Activated CD8-positive, alpha-beta T cell treated with anti-CD3 and anti-CD28 coated beads, Interleukin-2, amount 10 ng/mL, durations not matched to agents 7 days and 5 days (primary cell): ENCODE measurements at regions of chr4 and their contacts with region 1.

Region 1: GRCh38 chr4:99808260-99808857 is 8.3 kb upstream of the DAPP1 start:
- DNase-seq: peak; percentile 80
- ATAC-seq: peak; percentile 97
- H3K4me3 Mint-ChIP-seq: no peak overlapping the region
- H3K27ac Mint-ChIP-seq: no peak overlapping the region
- H3K4me1 Mint-ChIP-seq: peaks cover 14% of the 10 kb centered on the region
- H3K27me3 Mint-ChIP-seq: peaks cover 10% of the 10 kb centered on the region

Region 2: GRCh38 chr4:99552872-99553271 is 255.5 kb before region 1 on chr4:
- CTCF ChIA-PET with region 1: interaction called, 10 read pairs
- POLR2A ChIA-PET with region 1: no interaction called
- DNase-seq: no peak
- ATAC-seq: no peak
- H3K4me3 Mint-ChIP-seq: no peak overlapping the region
- H3K27ac Mint-ChIP-seq: no peak overlapping the region
- H3K4me1 Mint-ChIP-seq: no peaks in the 10 kb centered on the region
- H3K27me3 Mint-ChIP-seq: no peaks in the 10 kb centered on the region

Region 3: GRCh38 chr4:99847362-99847976 is 39.1 kb after region 1 on chr4:
- CTCF ChIA-PET with region 1: interaction called, 23 read pairs
- POLR2A ChIA-PET with region 1: no interaction called
- DNase-seq: peak; percentile 34
- ATAC-seq: peak; percentile 71
- H3K4me3 Mint-ChIP-seq: peak overlapping the region; percentile 5
- H3K27ac Mint-ChIP-seq: peak overlapping the region; percentile 84
- H3K4me1 Mint-ChIP-seq: peaks cover 62% of the 10 kb centered on the region
- H3K27me3 Mint-ChIP-seq: no peaks in the 10 kb centered on the region

Region 4: DNA sequence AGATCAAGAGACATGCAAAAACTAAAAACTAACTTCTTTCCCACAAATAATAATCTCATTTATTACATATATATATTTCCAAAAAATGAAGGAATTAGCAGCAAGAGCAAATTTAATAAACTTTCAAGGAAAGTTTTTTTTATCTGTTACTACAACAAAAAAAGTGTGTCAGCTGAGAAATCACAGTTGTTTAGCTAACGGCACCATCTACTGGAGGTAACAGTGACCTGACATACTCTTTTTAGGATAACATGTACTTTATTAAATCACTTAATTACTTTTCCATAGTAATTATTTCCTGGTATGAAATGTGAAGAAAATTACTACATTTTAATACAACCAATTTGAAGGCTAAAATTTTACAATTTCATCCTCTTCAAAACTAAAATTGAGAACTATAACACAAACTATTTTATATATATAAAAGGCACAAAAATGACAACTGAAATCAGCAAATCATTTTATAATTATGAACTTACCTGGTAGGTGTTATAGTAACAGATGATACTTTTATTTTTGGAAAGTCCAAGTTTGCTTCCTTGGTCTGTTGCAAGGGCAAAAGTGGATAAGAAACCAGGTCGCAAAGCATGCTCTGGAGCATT is 76.8 kb after region 1 on chr4:
- CTCF ChIA-PET with region 1: interaction called, 57 read pairs
- POLR2A ChIA-PET with region 1: no interaction called
- DNase-seq: peak; percentile 62
- ATAC-seq: no peak
- H3K4me3 Mint-ChIP-seq: no peak overlapping the region
- H3K27ac Mint-ChIP-seq: no peak overlapping the region
- H3K4me1 Mint-ChIP-seq: peaks cover 7% of the 10 kb centered on the region
- H3K27me3 Mint-ChIP-seq: no peaks in the 10 kb centered on the region

Region 5: DNA sequence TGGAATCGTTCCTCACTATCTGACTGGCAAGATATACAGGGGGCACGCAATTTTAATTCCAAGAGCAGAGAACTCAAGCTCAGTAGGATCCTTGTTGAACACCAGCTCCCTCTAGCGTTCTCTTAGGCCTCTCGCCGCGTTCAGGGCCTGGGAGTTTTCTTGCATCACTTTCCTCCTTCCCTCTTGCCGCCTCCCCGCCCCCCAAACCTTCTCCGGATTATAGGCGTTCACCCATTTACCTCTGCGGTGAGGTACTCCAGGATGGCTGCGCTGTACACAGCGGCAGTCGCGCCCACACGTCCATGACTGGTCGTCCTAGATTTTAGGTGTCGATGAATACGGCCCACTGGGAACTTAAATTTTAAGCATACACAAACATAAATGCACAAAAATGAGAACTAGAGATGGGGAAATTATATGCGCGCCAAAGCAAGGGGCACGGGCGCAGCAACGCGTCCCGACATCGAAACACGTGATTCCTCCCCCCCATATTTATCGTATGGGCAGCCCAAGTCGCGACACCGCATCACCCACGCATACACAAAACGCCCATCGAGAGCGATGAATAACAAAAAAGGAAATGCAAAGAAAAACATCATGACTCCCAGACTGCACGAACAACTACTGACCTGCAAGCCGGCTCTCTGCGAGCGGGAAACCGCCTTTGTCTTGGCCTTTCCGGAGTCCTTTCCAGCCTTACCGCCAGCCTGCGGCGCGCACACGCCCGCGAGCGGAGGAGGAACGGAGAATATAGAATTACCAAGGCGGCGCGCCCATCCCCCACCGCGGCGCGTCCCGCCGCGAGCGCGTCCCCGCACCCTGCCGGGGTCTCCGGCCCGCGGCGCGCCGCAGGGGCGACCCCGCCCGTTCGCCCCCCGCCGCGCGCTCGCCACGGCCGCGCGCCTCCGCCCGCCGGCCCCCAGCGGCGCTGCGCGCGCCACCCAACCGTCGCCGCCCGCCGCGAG is 141.0 kb after region 1 on chr4:
- CTCF ChIA-PET with region 1: interaction called, 19 read pairs
- POLR2A ChIA-PET with region 1: interaction called, 3 read pairs
- DNase-seq: peak; percentile 96
- ATAC-seq: peak; percentile 25
- H3K4me3 Mint-ChIP-seq: no peak overlapping the region
- H3K27ac Mint-ChIP-seq: no peak overlapping the region
- H3K4me1 Mint-ChIP-seq: peaks cover 37% of the 10 kb centered on the region
- H3K27me3 Mint-ChIP-seq: no peaks in the 10 kb centered on the region